Mammary epithelial cell (primary cell): ENCODE measurements at regions of chr6 and their contacts with region 1.

Region 1: GRCh38 chr6:109382576-109383437 is 540 bp upstream of the CD164 start:
- DNase-seq: peak; percentile 93
- H3K4me3 ChIP-seq: peak overlapping the region; percentile 70 to 100 (median 95)
- H3K27ac ChIP-seq: peak overlapping the region; percentile 98
- H3K4me1 ChIP-seq: peaks cover 29% of the 10 kb centered on the region
- H3K27me3 ChIP-seq: no peaks in the 10 kb centered on the region
- CTCF ChIP-seq: peak; percentile 42 to 61

Region 2: GRCh38 chr6:109073344-109074132 is 309.3 kb before region 1 on chr6:
- CTCF ChIA-PET with region 1: no interaction called
- dilution Hi-C with region 1: no loop called
- in situ Hi-C with region 1: no loop called
- intact Hi-C with region 1: no loop called
- DNase-seq: peak; percentile 53
- H3K4me3 ChIP-seq: no peak overlapping the region
- H3K27ac ChIP-seq: no peak overlapping the region
- H3K4me1 ChIP-seq: peaks cover 3% of the 10 kb centered on the region
- H3K27me3 ChIP-seq: no peaks in the 10 kb centered on the region
- CTCF ChIP-seq: peak; percentile 55 to 65

Region 3: GRCh38 chr6:109187399-109188114 is 195.2 kb before region 1 on chr6:
- CTCF ChIA-PET with region 1: interaction called, 13 read pairs
- dilution Hi-C with region 1: no loop called
- in situ Hi-C with region 1: loop called in 1 of 2 experiments (anchors 10 kb)
- intact Hi-C with region 1: loop called (anchors 1 kb)
- DNase-seq: peak; percentile 16
- H3K4me3 ChIP-seq: no peak overlapping the region
- H3K27ac ChIP-seq: no peak overlapping the region
- H3K4me1 ChIP-seq: no peaks in the 10 kb centered on the region
- H3K27me3 ChIP-seq: peaks cover 2% of the 10 kb centered on the region
- CTCF ChIP-seq: peak; percentile 88 to 98

Region 4: DNA sequence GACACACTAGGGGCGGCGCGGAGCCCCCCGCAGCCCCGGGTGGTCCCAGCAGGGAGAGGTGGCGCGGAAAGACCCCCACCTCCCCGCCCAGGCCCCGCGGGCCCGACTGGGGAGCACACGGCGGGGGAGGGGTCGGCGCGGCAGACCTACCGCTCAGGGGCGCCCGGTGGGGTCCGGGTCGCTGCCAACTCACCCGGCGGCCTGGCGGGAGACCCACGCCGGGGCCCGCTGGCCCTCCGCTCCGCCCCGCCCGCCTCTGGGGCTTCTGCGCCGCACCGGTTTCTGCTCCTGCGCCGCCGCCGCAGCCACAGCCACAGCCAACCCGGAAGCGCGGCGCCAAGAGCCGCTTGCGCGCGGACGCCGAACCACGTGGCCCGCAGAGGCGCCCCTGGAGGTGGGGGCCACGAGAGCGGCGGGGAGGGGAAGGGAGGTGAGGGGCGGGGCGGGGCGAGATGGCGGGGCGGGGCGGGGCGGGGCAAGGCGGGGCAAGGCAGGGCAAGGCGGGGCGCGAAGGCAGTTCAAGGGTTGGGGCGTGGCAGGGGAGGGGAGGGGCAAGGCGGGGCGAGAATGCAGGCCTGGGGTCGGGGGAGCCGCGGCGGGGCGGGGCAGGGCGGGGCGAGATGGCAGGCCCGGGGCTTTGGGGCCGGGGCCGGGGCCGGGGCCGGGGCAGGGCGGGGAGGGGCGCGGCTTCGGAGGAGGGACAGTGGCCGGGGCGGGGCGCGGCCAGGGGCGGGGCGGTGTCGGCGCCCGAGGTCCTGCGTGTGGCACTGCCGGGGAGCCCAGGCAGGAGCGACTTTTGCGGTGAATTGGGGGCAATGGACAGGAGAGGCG is 100.3 kb after region 1 on chr6 and contains the start of gene ZBTB24:
- CTCF ChIA-PET with region 1: no interaction called
- dilution Hi-C with region 1: no loop called
- in situ Hi-C with region 1: no loop called
- intact Hi-C with region 1: loop called (anchors 2 kb)
- DNase-seq: peak; percentile 87
- H3K4me3 ChIP-seq: peak within 1 kb of the TSS; percentile 67 to 82 (median 70)
- H3K27ac ChIP-seq: peak within 1 kb of the TSS; percentile 68
- H3K4me1 ChIP-seq: peaks cover 16% of the 10 kb centered on the region
- H3K27me3 ChIP-seq: no peaks in the 10 kb centered on the region
- CTCF ChIP-seq: no peak
- total RNA-seq, gene ZBTB24: 7.9 to 10.0 TPM